Heart left ventricle (tissue), 16 donors: ENCODE measurements at regions of chr9 and their contacts with region 1.

Region 1: GRCh38 chr9:17531642-17532254 is 47.1 kb upstream of the SH3GL2 start:
- DNase-seq: no peak
- ATAC-seq: no peak
- H3K4me3 ChIP-seq: no peak overlapping the region
- H3K27ac ChIP-seq: no peak overlapping the region
- H3K4me1 ChIP-seq: peaks cover 0 to 3% (median 0%) of the 10 kb centered on the region in 12 donors
- H3K27me3 ChIP-seq: no peaks in the 10 kb centered on the region
- CTCF ChIP-seq: peak; percentile 37 to 73 (median 58)
- POLR2A ChIP-seq: no peak

Region 2: DNA sequence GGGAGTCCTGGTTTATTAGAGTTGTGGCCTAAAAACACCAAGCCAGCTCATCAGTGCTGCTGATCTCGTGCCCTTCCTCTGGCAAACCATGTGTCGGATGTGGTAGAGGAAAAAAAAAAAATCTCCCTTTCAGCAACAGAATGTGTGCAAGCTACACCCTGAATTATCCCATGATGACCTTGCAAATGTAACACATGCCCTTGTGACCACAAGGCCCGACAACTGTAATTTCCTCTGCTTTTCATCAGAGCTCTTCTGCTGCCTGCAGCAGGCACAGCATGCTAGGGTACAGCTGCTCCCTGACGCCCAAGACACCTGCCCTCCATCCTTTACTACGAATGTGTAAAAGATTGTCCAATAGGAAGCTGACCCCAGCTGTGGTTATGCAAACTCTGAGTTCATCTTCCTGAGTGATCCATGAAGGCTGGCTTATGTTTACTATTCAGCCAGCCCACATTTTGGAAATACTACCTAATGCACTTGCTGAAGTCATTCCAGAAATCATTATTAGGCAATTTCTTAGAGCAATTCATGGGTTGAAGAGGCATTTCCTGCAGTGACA is 646.7 kb before region 1 on chr9:
- intact Hi-C with region 1: no loop called
- DNase-seq: peak in 1 of 5 donors; percentile 23
- ATAC-seq: peak; percentile 43 to 81 (median 62)
- H3K4me3 ChIP-seq: no peak overlapping the region
- H3K27ac ChIP-seq: peak overlapping the region in 2 of 12 donors; percentile 18 to 34
- H3K4me1 ChIP-seq: peaks cover 0 to 13% (median 0%) of the 10 kb centered on the region in 12 donors
- H3K27me3 ChIP-seq: no peaks in the 10 kb centered on the region
- CTCF ChIP-seq: no peak
- POLR2A ChIP-seq: no peak

Region 3: DNA sequence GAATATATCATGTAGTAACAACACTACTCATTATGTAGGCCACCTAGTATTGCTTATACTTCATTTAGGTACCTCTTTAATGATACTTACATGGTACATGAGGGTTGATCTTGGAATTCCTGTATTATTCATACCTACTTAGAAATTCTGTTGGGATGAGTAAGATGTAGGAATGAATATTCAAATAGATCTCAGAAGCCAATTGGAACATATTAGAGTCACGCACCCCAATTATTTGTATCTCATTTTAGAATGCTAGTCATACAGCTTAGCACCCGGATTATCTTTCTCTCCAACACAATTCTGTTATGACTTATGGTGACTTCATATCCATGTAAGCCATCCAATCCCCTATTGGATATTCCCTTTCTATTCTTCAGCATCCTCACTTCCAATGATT is 59.6 kb before region 1 on chr9:
- intact Hi-C with region 1: no loop called
- DNase-seq: no peak
- ATAC-seq: no peak
- H3K4me3 ChIP-seq: no peak overlapping the region
- H3K27ac ChIP-seq: no peak overlapping the region
- H3K4me1 ChIP-seq: no peaks in the 10 kb centered on the region
- H3K27me3 ChIP-seq: no peaks in the 10 kb centered on the region
- CTCF ChIP-seq: no peak
- POLR2A ChIP-seq: no peak

Region 4: DNA sequence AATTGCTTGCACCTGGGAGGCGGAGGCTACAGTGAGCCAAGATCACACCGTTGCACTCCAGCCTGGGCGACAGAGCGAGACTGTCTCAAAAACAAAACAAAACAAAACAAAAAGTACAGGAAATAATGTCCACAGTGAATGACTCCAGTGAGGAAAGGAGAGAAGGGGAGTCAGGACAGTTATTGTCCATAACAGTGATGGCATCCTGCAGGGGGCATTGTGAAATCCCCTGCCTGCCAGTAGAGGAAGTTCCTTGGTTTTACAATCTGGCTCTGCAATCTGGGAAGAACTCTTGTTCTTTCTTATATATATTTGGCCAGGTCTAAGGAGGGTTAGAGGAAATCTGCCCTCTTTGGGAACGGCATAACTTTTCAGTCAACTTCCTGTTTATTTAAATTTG is 55.4 kb after region 1 on chr9:
- intact Hi-C with region 1: no loop called
- DNase-seq: no peak
- ATAC-seq: no peak
- H3K4me3 ChIP-seq: no peak overlapping the region
- H3K27ac ChIP-seq: no peak overlapping the region
- H3K4me1 ChIP-seq: peaks cover 0 to 4% (median 0%) of the 10 kb centered on the region in 12 donors
- H3K27me3 ChIP-seq: no peaks in the 10 kb centered on the region
- CTCF ChIP-seq: no peak
- POLR2A ChIP-seq: no peak

Region 5: DNA sequence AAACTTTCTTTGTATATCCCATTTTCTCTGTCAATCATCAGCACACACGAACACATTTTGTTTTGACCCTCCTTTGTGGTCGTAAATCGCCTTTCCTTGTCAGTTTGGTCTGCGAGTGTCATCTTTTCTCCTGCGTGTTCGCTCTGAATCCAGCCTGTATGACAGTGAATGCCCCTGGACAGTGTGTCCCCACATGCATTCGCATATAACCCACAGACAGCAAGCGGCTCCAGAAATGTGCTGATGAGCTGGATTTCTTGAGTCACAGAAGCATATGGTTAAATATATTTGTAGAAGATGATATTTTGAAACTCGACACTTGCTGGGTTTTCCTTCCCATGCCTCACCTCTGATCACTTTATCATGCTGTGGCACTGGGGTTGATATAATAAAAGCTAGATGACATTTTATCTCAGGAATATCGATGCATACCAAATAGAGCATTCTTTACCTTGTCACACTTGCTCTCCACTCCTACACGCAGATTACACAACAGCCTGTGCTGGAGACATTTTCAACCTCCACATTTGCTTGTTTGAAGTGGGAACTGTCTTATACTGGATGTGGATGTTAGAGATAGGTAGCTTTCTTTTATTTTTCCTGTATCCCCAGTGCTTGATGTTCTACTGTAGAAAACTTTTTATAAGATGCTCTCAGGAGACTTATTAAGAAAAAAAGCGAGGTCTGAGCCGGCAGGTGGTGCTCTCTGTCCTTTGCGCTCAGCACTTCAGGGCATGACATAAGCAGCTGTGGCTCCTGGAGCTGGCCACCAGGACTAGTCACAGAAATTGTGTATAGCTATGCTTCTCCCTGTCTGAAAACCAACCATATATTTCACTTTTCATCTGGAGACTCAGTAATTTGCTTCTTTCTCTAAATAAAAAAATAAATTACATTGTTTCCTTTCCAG is 262.2 kb after region 1 on chr9:
- intact Hi-C with region 1: loop called in 1 of 10 experiments (anchors 10 kb)
- DNase-seq: no peak
- ATAC-seq: no peak
- H3K4me3 ChIP-seq: no peak overlapping the region
- H3K27ac ChIP-seq: no peak overlapping the region
- H3K4me1 ChIP-seq: no peaks in the 10 kb centered on the region
- H3K27me3 ChIP-seq: peaks cover 0 to 8% (median 0%) of the 10 kb centered on the region in 9 donors
- CTCF ChIP-seq: no peak
- POLR2A ChIP-seq: no peak

Region 6: GRCh38 chr9:17802249-17802857 is 270.6 kb after region 1 on chr9:
- intact Hi-C with region 1: loop called (anchors 1 to 10 kb)
- DNase-seq: no peak
- ATAC-seq: no peak
- H3K4me3 ChIP-seq: no peak overlapping the region
- H3K27ac ChIP-seq: no peak overlapping the region
- H3K4me1 ChIP-seq: peaks cover 0 to 2% (median 0%) of the 10 kb centered on the region in 12 donors
- H3K27me3 ChIP-seq: peaks cover 0 to 12% (median 0%) of the 10 kb centered on the region in 9 donors
- CTCF ChIP-seq: peak in 9 of 12 donors; percentile 23 to 54 (median 42)
- POLR2A ChIP-seq: no peak

Region 7: GRCh38 chr9:17816431-17817027 is 284.8 kb after region 1 on chr9:
- intact Hi-C with region 1: no loop called
- DNase-seq: no peak
- ATAC-seq: no peak
- H3K4me3 ChIP-seq: no peak overlapping the region
- H3K27ac ChIP-seq: no peak overlapping the region
- H3K4me1 ChIP-seq: no peaks in the 10 kb centered on the region
- H3K27me3 ChIP-seq: no peaks in the 10 kb centered on the region
- CTCF ChIP-seq: no peak
- POLR2A ChIP-seq: no peak

Region 8: GRCh38 chr9:18208154-18209059 is 676.7 kb after region 1 on chr9:
- intact Hi-C with region 1: loop called in 9 of 10 experiments (anchors 2 to 10 kb)
- DNase-seq: peak in 3 of 5 donors; percentile 13 to 26 (median 23)
- ATAC-seq: peak in 2 of 4 donors; percentile 51 to 52
- H3K4me3 ChIP-seq: no peak overlapping the region
- H3K27ac ChIP-seq: no peak overlapping the region
- H3K4me1 ChIP-seq: no peaks in the 10 kb centered on the region
- H3K27me3 ChIP-seq: no peaks in the 10 kb centered on the region
- CTCF ChIP-seq: peak; percentile 23 to 62 (median 50)
- POLR2A ChIP-seq: no peak

Region 9: GRCh38 chr9:18215626-18216025 is 683.9 kb after region 1 on chr9:
- intact Hi-C with region 1: loop called in 8 of 10 experiments (anchors 2 to 5 kb)
- DNase-seq: no peak
- ATAC-seq: no peak
- H3K4me3 ChIP-seq: no peak overlapping the region
- H3K27ac ChIP-seq: no peak overlapping the region
- H3K4me1 ChIP-seq: no peaks in the 10 kb centered on the region
- H3K27me3 ChIP-seq: no peaks in the 10 kb centered on the region
- CTCF ChIP-seq: no peak
- POLR2A ChIP-seq: no peak